ENCODE measurements at regions of chr20 and their contacts with region 1.

Region 1: GRCh38 chr20:38229376-38230252 is 30.9 kb downstream of the KIAA1755 start:
- DNase-seq: no peak
- H3K4me3 ChIP-seq: no peak overlapping the region
- H3K27ac ChIP-seq: no peak overlapping the region
- H3K4me1 ChIP-seq: no peaks in the 10 kb centered on the region
- H3K27me3 ChIP-seq: no peaks in the 10 kb centered on the region
- CTCF ChIP-seq: peak; percentile 61

Region 2: GRCh38 chr20:38129366-38129765 is 100.2 kb before region 1 on chr20:
- CTCF ChIA-PET with region 1: no interaction called
- POLR2A ChIA-PET with region 1: interaction called, 23 read pairs
- intact Hi-C with region 1: no loop called
- DNase-seq: no peak
- H3K4me3 ChIP-seq: no peak overlapping the region
- H3K27ac ChIP-seq: no peak overlapping the region
- H3K4me1 ChIP-seq: no peaks in the 10 kb centered on the region
- H3K27me3 ChIP-seq: no peaks in the 10 kb centered on the region
- CTCF ChIP-seq: no peak

Region 3: GRCh38 chr20:38173237-38174156 is 56.1 kb before region 1 on chr20:
- CTCF ChIA-PET with region 1: no interaction called
- POLR2A ChIA-PET with region 1: no interaction called
- intact Hi-C with region 1: no loop called
- DNase-seq: no peak
- H3K4me3 ChIP-seq: no peak overlapping the region
- H3K27ac ChIP-seq: no peak overlapping the region
- H3K4me1 ChIP-seq: no peaks in the 10 kb centered on the region
- H3K27me3 ChIP-seq: no peaks in the 10 kb centered on the region
- CTCF ChIP-seq: no peak

Region 4: DNA sequence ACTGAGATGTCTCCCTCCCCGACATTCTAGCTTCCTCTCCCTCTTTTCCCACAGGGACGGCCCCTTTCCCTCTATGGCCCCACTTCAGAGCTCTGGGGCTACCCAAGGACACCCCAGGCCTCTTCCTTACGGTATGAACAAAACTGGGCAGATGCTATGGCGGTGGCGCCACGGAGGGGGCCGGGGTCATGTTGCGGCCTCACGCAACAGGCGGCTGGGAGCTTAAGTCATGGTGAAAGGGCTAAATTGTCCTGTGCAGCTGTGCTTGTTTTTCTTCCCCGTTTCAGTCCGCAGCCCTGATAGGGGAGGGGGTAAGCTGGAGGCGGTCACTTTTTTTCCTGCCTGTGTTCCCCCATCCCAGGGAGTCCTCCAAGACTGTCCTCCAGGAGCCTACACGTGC is 48.5 kb after region 1 on chr20:
- CTCF ChIA-PET with region 1: no interaction called
- POLR2A ChIA-PET with region 1: no interaction called
- intact Hi-C with region 1: no loop called
- DNase-seq: no peak
- H3K4me3 ChIP-seq: no peak overlapping the region
- H3K27ac ChIP-seq: no peak overlapping the region
- H3K4me1 ChIP-seq: no peaks in the 10 kb centered on the region
- H3K27me3 ChIP-seq: no peaks in the 10 kb centered on the region
- CTCF ChIP-seq: no peak

Region 5: GRCh38 chr20:38412877-38413577 is 183.4 kb after region 1 on chr20:
- CTCF ChIA-PET with region 1: interaction called, 4 read pairs
- POLR2A ChIA-PET with region 1: no interaction called
- intact Hi-C with region 1: loop called (anchors 1 kb)
- DNase-seq: no peak
- H3K4me3 ChIP-seq: no peak overlapping the region
- H3K27ac ChIP-seq: no peak overlapping the region
- H3K4me1 ChIP-seq: no peaks in the 10 kb centered on the region
- H3K27me3 ChIP-seq: no peaks in the 10 kb centered on the region
- CTCF ChIP-seq: no peak

Region 6: GRCh38 chr20:38446441-38447209 is 217.0 kb after region 1 on chr20:
- CTCF ChIA-PET with region 1: no interaction called
- POLR2A ChIA-PET with region 1: no interaction called
- intact Hi-C with region 1: no loop called
- DNase-seq: peak; percentile 96
- H3K4me3 ChIP-seq: peak overlapping the region; percentile 90
- H3K27ac ChIP-seq: peak overlapping the region; percentile 95
- H3K4me1 ChIP-seq: peaks cover 10% of the 10 kb centered on the region
- H3K27me3 ChIP-seq: no peaks in the 10 kb centered on the region
- CTCF ChIP-seq: peak; percentile 96

Measured in A673 (cell line).